Gastrocnemius medialis (tissue), 4 donors: ENCODE measurements at regions of chr6 and their contacts with region 1.

Region 1: GRCh38 chr6:17780061-17780460 is 73.3 kb upstream of the NUP153 start:
- DNase-seq: no peak
- ATAC-seq: no peak
- H3K4me3 ChIP-seq: no peak overlapping the region
- H3K27ac ChIP-seq: no peak overlapping the region
- H3K4me1 ChIP-seq: no peaks in the 10 kb centered on the region
- H3K27me3 ChIP-seq: no peaks in the 10 kb centered on the region
- CTCF ChIP-seq: no peak
- POLR2A ChIP-seq: no peak

Region 2: DNA sequence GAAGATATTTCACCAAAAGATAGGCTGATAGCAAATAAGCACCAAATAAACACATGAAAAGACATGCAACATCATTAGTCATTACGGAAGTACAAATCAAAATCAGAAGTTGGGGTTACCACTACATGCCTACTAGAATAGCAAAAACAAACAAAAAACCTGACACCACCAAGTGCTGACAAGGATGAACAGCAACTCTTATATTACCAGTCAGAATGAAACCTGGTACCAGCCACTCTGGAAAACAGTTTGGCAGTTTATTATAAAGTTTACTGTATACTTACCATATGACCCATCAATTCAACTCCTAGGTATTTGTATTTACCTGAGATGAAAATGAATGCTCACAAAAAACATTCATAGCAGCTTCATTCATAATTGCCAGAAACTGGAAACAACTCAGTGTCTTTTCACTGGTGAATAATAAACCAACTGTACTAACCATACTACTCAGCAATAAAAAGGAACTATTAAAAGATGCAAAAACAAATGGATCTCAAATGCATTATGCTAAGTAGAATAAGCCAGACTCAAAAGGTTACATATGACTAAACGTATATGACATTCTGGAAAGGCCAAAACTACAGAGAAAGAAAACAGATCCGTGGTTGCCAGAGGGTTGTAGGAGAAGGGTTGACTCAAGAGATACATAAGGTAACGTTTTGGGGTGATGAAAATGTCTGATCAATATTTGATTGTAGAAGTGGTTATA is 106.4 kb before region 1 on chr6:
- in situ Hi-C with region 1: loop called in 1 of 4 experiments (anchors 25 kb)
- intact Hi-C with region 1: loop called (anchors 10 kb)
- DNase-seq: no peak
- ATAC-seq: no peak
- H3K4me3 ChIP-seq: no peak overlapping the region
- H3K27ac ChIP-seq: no peak overlapping the region
- H3K4me1 ChIP-seq: peaks cover 0 to 6% of the 10 kb centered on the region in 2 donors
- H3K27me3 ChIP-seq: no peaks in the 10 kb centered on the region
- CTCF ChIP-seq: no peak
- POLR2A ChIP-seq: no peak